Sigmoid colon (tissue), 7 donors: ENCODE measurements at regions of chr3 and their contacts with region 1.

Region 1: DNA sequence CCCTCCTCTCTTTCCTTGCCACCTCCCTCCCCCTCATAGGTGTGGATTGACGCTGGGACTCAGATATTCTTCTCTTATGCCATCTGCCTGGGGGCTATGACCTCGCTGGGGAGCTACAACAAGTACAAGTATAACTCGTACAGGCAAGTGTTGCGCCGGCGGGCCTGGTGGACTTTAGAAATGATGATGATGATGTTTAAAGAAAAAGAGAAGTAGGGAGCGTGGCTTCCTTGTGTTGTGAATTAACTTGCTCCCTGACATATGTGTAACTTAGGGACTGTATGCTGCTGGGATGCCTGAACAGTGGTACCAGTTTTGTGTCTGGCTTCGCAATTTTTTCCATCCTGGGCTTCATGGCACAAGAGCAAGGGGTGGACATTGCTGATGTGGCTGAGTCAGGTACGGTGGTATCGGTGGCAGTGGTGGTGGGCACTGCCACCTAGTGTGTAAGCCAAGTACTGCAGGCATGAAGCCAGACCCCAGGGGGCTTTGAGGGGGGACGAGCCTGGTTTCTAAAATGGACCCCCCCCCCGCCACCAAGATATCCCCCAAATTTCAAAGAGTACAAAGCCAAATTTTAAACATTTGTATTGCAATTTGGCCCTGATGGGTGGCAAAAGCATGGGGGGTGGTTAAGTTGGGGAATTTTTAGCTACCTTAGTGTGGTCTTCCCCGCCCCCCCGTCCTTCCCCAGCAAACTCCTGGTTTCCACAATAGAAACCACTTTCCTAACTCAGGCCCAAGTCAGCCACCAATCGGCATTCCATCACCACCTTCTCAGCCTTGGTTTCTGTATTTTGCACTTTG is 65.6 kb downstream of the SLC6A6 start:
- DNase-seq: no peak
- H3K4me3 ChIP-seq: no peak overlapping the region
- H3K27ac ChIP-seq: no peak overlapping the region
- H3K4me1 ChIP-seq: peaks cover 0 to 5% (median 2%) of the 10 kb centered on the region in 4 donors
- H3K27me3 ChIP-seq: no peaks in the 10 kb centered on the region
- CTCF ChIP-seq: peak; percentile 77 to 99 (median 93)
- EP300 ChIP-seq: no peak
- POLR2A ChIP-seq: no peak

Region 2: GRCh38 chr3:14144423-14145075 is 323.5 kb before region 1 on chr3:
- intact Hi-C with region 1: no loop called
- DNase-seq: peak; percentile 92
- H3K4me3 ChIP-seq: peak overlapping the region in 3 of 4 donors; percentile 7 to 24 (median 20)
- H3K27ac ChIP-seq: peak overlapping the region; percentile 81 to 92 (median 84)
- H3K4me1 ChIP-seq: peaks cover 0 to 54% (median 46%) of the 10 kb centered on the region in 4 donors
- H3K27me3 ChIP-seq: no peaks in the 10 kb centered on the region
- CTCF ChIP-seq: no peak
- EP300 ChIP-seq: peak in 3 of 4 donors; percentile 39 to 83 (median 47)
- POLR2A ChIP-seq: no peak

Region 3: GRCh38 chr3:14203521-14204079 is 264.4 kb before region 1 on chr3:
- intact Hi-C with region 1: loop called (anchors 2 kb)
- DNase-seq: peak; percentile 83
- H3K4me3 ChIP-seq: no peak overlapping the region
- H3K27ac ChIP-seq: peak overlapping the region in 1 of 4 donors; percentile 22
- H3K4me1 ChIP-seq: no peaks in the 10 kb centered on the region
- H3K27me3 ChIP-seq: no peaks in the 10 kb centered on the region
- CTCF ChIP-seq: peak; percentile 28 to 76 (median 68)
- EP300 ChIP-seq: no peak
- POLR2A ChIP-seq: no peak

Region 4: GRCh38 chr3:14261229-14261628 is 206.8 kb before region 1 on chr3:
- intact Hi-C with region 1: loop called (anchors 1 kb)
- DNase-seq: peak; percentile 91
- H3K4me3 ChIP-seq: no peak overlapping the region
- H3K27ac ChIP-seq: no peak overlapping the region
- H3K4me1 ChIP-seq: no peaks in the 10 kb centered on the region
- H3K27me3 ChIP-seq: no peaks in the 10 kb centered on the region
- CTCF ChIP-seq: peak; percentile 86 to 97 (median 94)
- EP300 ChIP-seq: no peak
- POLR2A ChIP-seq: no peak

Region 5: DNA sequence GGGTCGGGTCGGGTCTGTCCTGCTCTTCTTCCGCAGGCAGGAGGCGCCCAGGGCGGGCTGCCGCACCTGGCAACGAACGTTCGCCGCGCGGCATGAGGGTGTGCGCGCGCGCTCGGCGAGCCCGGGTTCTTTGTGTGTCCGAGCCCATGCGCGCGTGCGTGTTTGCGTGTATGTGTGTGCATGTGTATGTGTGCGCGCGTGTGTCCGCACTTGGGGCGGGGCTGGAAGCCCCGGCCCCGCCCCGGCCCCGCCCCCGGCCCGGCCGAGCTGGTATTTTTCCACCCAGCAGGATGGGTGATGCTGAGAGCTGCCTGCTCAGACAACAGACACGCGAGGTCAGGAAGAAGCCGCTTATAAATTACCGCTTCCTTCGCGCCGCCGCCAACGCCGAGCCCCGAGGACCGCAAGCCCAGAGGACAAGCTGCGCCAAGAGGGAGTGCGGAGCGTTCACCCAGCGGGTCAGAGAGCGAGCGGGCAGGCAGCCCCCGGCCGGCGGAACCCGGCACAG is 65.7 kb before region 1 on chr3 and contains the start of gene SLC6A6:
- intact Hi-C with region 1: no loop called
- DNase-seq: peak; percentile 97
- H3K4me3 ChIP-seq: peak within 1 kb of the TSS; percentile 39 to 86 (median 58)
- H3K27ac ChIP-seq: peak within 1 kb of the TSS; percentile 72 to 94 (median 81)
- H3K4me1 ChIP-seq: peaks cover 0 to 48% (median 39%) of the 10 kb centered on the region in 4 donors
- H3K27me3 ChIP-seq: no peaks in the 10 kb centered on the region
- CTCF ChIP-seq: peak in 3 of 4 experiments; percentile 23 to 43 (median 38)
- EP300 ChIP-seq: peak in 1 of 4 donors; percentile 43
- POLR2A ChIP-seq: peak in 1 of 2 donors; percentile 18
- total RNA-seq, gene SLC6A6: 6.4 to 19.1 (median 9.1) TPM

Region 6: GRCh38 chr3:14431892-14432834 is 35.9 kb before region 1 on chr3:
- intact Hi-C with region 1: no loop called
- DNase-seq: peak; percentile 87
- H3K4me3 ChIP-seq: no peak overlapping the region
- H3K27ac ChIP-seq: peak overlapping the region; percentile 12 to 63 (median 46)
- H3K4me1 ChIP-seq: peaks cover 0 to 60% (median 35%) of the 10 kb centered on the region in 4 donors
- H3K27me3 ChIP-seq: no peaks in the 10 kb centered on the region
- CTCF ChIP-seq: no peak
- EP300 ChIP-seq: no peak
- POLR2A ChIP-seq: no peak